Right lobe of liver (tissue), 6 donors: ENCODE measurements at regions of chr9 and their contacts with region 1.

Region 1: DNA sequence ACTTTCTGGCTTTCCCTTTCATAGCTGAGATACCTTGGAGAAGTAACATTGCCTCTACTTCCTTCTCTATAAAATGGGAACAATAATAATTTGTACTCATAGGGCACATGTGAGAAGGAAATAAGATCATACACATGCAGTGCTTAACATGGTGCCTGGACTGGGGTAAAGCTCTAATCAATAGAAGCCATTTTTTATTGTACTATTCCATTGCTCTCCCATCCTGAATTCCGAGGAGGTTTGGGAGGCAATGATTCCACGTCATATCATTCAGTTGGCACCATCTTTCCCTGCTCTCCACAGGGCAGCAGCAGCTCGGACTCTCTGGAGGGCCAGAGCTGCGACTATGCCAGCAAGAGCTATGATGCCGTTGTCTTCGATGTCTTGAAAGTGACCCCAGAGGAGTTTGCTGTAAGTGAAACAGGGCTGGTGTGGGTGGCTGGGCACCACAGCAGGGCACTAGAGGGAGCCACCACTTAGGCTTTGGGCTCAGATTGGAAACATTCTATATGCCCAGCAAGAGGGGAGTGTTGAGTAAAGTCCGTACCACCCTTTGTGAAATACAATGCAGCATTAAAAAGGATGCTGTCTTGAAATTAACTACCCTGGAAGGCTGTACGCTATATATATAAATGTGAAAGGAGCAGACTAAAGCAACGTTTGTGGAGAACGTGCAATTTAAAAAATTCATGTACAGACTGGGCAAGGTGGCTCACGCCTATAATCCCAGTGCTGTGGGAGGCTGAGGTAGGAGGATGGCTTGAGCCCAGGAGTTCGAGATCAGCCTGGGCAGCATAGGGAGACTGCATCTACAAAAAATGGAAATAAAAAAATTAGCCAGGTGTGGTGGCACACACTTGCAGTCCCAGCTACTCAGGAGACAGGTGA is 51.2 kb downstream of the RALGPS1 start:
- DNase-seq: peak in 1 of 3 donors; percentile 39
- ATAC-seq: peak; percentile 76 to 88 (median 84)
- H3K4me3 ChIP-seq: no peak overlapping the region
- H3K27ac ChIP-seq: no peak overlapping the region
- H3K4me1 ChIP-seq: no peaks in the 10 kb centered on the region
- H3K27me3 ChIP-seq: no peaks in the 10 kb centered on the region
- CTCF ChIP-seq: peak; percentile 55 to 74 (median 73)
- POLR2A ChIP-seq: no peak

Region 2: DNA sequence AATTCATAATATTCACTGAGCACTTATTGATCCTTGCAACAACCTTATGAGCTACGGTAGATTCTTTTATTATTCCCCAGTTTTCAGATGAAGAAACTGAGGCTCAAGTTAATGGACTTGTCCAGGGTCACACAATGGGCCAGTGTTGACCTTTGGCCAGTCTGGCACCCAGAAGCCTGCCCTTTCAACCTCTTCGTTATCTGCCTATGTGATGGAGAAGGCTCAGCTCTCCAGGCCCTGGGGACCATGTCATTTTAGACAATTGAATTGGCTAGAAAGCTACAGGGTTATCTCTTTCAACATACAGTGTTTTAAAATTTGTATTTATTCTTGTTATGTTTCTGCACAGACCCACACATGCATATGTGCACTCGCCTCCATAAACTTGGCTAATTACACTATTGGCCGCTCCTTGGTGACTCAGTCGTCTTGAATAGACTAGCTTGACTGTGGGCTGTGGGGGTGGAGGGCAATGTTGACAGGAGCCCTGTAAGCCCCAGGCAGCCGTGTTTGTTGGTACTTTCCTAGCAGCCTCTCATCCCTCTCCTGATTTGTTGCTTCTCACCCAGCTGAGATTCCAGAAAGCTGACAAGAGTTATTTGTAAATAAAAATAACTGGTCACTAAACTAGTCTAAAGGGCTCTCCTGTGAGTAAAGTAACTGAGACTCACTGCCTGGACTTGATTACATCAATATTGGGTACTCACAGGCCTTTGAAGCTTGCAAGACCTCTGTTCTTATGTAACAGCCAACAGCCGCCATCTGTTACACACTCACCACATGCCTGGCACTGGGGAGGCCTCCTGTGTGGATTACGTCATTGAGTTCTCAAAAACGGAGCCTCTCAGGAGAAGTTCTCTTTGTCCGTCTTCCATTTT is 165.1 kb after region 1 on chr9:
- intact Hi-C with region 1: no loop called
- DNase-seq: no peak
- ATAC-seq: peak in 3 of 4 donors; percentile 27 to 72 (median 29)
- H3K4me3 ChIP-seq: no peak overlapping the region
- H3K27ac ChIP-seq: no peak overlapping the region
- H3K4me1 ChIP-seq: peaks cover 0 to 5% (median 0%) of the 10 kb centered on the region in 4 donors
- H3K27me3 ChIP-seq: no peaks in the 10 kb centered on the region
- CTCF ChIP-seq: no peak
- POLR2A ChIP-seq: no peak

Region 3: GRCh38 chr9:127205183-127205470 is 239.3 kb after region 1 on chr9:
- intact Hi-C with region 1: loop called in 1 of 2 experiments (anchors 10 kb)
- DNase-seq: no peak
- ATAC-seq: peak in 3 of 4 donors; percentile 3 to 44 (median 39)
- H3K4me3 ChIP-seq: no peak overlapping the region
- H3K27ac ChIP-seq: no peak overlapping the region
- H3K4me1 ChIP-seq: no peaks in the 10 kb centered on the region
- H3K27me3 ChIP-seq: no peaks in the 10 kb centered on the region
- CTCF ChIP-seq: peak; percentile 9 to 33 (median 24)
- POLR2A ChIP-seq: no peak